ENCODE measurements at regions of chr14 and their contacts with region 1.

Region 1: DNA sequence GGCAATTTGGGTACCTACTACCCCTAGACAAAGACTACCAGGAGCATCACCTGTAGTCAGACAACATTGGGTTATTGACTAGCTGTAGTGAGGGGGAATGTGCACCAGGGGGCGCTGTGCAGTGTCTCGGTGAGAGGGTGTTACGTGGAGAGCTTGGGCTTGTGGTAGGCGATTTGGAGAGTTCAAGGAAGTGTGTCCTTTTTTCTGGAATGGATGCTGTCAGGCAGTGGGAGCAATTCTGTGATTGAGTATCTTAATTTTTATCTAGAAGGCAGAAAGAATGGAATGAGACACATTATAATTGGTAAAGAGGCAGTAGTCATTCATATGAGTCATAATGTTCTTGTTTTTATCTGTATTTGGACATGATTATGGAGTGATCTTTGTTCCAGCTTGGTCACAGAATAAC is 187.7 kb downstream of the GALC start:
- DNase-seq: peak; percentile 67
- H3K4me3 Mint-ChIP-seq: no peak overlapping the region
- H3K27ac Mint-ChIP-seq: no peak overlapping the region
- H3K4me1 Mint-ChIP-seq: no peaks in the 10 kb centered on the region
- H3K27me3 Mint-ChIP-seq: no peaks in the 10 kb centered on the region

Region 2: DNA sequence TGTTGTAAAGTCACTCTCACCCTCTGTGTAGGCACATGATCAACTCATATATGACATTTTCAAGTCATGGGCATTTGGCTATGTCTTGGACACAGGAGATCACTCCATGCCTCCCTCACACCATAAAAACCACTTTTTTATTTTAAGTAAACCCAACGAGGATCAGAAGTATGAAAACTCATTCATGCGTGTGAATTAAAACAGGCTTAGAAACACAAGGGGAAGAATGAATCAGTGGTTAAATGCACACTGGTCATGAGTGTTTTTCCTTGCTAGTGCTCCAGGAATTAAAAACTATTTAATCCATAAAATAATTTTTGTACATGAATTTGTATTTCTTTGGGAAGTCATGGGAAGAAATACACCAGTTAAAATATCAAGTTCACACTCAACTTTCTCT is 10.8 kb before region 1 on chr14:
- CTCF ChIA-PET with region 1: interaction called, 12 read pairs
- DNase-seq: no peak
- H3K4me3 Mint-ChIP-seq: no peak overlapping the region
- H3K27ac Mint-ChIP-seq: no peak overlapping the region
- H3K4me1 Mint-ChIP-seq: no peaks in the 10 kb centered on the region
- H3K27me3 Mint-ChIP-seq: no peaks in the 10 kb centered on the region

Region 3: GRCh38 chr14:87896393-87897380 is 91.4 kb after region 1 on chr14:
- CTCF ChIA-PET with region 1: interaction called, 16 read pairs
- DNase-seq: no peak
- H3K4me3 Mint-ChIP-seq: no peak overlapping the region
- H3K27ac Mint-ChIP-seq: no peak overlapping the region
- H3K4me1 Mint-ChIP-seq: no peaks in the 10 kb centered on the region
- H3K27me3 Mint-ChIP-seq: peaks cover 4% of the 10 kb centered on the region

Measured in activated naive CD4-positive, alpha-beta T cell treated with anti-CD3 and anti-CD28 coated beads, Interleukin-2, amount 10 ng/mL, durations not matched to agents 7 days and 5 days (primary cell).